ENCODE measurements at regions of chr17 and their contacts with region 1.

Region 1: GRCh38 chr17:39754161-39754951 is 16.6 kb downstream of the GRB7 start:
- DNase-seq: peak; percentile 97
- ATAC-seq: peak; percentile 94

Region 2: DNA sequence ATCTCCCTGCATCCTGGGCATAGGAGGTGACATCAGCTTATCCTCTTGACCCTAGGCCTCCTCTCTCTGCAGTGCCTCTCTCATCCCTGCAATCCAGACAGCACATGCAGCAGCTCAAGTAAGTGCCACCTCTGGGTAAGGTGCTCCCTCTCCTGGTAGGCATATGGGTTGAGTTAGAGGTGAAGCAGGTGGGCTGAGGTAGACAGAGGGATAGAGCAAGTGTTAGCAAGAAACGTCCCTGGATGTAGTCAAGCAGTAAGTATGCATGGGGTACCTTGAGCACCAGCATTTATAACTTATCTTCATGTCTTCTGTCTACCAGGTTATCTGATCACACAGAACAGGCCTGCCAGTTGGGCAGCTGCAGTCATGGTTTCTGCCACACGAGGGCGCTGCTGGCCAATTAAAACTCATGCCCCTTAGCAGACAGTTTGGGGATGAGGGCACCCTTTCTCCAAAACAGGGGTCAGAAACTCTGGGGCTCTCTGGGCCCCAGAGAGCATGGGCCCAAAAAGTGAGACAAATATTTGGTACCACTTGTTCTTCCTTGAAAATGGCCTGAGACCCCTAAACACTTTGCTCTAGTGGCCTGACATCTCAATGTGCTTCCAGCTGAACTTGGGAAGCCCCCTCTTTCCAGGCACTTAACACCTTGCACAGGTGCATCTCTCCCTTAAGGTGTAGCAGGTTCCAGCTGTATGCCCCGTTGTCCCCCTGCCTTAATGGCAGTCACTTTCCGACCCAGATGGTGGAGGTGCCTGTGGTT is 206.5 kb before region 1 on chr17:
- intact Hi-C with region 1: loop called (anchors 5 kb)
- DNase-seq: peak; percentile 73
- ATAC-seq: peak; percentile 70

Region 3: DNA sequence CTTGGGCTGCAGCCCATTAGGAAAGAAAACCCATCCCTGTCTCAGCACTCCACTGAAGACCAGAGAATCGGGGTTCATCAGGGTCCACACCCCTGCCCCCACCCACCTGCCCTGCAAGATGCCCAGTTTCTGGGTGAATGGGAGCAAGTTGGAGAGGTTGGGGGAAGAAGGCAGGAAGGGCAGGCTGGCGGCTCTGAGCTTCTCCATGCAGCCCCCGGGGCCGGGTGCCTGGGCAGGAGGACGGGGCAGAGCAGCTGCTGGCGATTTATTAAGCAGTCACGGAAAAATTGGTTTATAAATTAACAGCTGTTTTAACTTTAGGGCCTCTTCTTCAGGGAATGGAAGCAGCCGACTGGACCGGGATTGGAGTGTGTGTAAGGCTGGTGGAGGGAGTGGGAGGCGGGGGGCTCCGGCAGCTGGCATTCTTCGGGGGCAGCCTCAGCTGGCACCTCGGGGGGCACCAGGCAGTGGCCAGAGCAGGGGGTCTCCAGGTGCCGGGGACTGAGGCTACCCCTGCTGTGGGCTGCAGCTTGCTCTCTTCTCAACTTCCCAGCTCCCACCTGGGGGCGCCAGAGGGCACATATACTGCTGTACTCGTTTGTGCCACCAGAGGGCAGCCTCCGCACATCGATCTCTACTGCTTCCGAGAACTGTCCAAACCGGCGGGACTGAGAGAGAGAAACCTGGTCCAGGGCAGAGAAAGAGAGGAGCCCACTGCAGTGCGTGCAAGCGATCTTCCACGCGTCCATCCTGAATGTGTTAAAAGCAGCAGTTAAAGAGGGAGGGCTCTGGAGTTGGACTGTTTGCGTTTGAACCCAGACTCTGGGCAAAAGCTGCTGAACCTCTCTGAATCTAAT is 132.6 kb before region 1 on chr17:
- intact Hi-C with region 1: loop called (anchors 1 kb)
- DNase-seq: peak; percentile 96
- ATAC-seq: peak; percentile 79

Region 4: GRCh38 chr17:39636927-39637736 is 117.2 kb before region 1 on chr17 and contains the start of gene STARD3:
- intact Hi-C with region 1: loop called (anchors 5 kb)
- DNase-seq: peak; percentile 98
- ATAC-seq: peak; percentile 96
- total RNA-seq, gene STARD3: 21.4 TPM

Region 5: GRCh38 chr17:39668199-39668966 is 86.0 kb before region 1 on chr17 and contains the start of gene PNMT:
- intact Hi-C with region 1: loop called (anchors 5 kb)
- DNase-seq: peak; percentile 92
- ATAC-seq: no peak
- total RNA-seq, gene PNMT: 5.1 TPM

Region 6: GRCh38 chr17:39687811-39688518 is 66.4 kb before region 1 on chr17 and contains the start of gene PGAP3:
- intact Hi-C with region 1: no loop called
- DNase-seq: peak; percentile 92
- ATAC-seq: peak; percentile 94
- total RNA-seq, gene PGAP3: 10.4 TPM

Region 7: DNA sequence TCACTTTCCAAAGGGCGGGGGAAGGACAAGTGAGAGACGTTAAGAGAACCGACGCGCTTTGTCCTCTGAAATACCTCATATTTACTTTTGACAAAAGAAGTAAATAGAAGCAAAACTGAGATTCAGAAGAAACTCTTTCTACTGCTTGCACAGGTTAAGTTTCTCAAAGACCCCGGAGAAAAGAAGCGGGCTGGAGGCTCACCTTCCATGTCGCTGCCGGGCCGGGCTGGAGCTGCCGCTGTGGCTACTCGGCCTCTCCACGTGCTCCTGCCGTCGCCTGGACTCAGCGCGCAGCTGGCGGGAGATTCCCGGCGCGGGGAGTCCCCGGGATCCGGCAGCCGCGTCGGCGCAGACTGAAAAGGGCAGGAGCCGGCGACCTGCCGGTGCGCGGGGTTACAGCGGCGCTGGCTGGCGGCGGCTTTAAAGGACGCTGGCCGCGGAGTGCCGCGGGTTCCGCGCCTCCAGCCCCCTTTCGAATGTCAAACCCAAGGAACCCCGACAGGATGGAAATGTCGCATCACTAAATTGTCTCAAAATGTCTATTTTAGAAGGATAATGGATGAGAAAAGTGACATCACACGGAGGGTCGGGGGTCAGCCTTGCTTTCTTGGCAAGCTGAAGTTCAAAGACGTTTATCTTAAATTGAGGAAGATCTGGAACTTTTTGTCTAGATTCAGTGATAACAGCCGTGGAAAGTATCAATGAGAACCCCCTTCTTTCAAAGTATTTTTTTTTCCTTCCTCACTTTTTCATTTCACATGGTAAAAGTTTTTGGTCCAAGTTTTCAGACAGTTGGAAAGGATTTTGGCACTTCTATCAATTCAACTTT is 109.8 kb after region 1 on chr17 and contains the start of gene IKZF3:
- intact Hi-C with region 1: loop called (anchors 10 kb)
- DNase-seq: peak; percentile 75
- ATAC-seq: peak; percentile 65
- total RNA-seq, gene IKZF3: 0.32 TPM

Region 8: DNA sequence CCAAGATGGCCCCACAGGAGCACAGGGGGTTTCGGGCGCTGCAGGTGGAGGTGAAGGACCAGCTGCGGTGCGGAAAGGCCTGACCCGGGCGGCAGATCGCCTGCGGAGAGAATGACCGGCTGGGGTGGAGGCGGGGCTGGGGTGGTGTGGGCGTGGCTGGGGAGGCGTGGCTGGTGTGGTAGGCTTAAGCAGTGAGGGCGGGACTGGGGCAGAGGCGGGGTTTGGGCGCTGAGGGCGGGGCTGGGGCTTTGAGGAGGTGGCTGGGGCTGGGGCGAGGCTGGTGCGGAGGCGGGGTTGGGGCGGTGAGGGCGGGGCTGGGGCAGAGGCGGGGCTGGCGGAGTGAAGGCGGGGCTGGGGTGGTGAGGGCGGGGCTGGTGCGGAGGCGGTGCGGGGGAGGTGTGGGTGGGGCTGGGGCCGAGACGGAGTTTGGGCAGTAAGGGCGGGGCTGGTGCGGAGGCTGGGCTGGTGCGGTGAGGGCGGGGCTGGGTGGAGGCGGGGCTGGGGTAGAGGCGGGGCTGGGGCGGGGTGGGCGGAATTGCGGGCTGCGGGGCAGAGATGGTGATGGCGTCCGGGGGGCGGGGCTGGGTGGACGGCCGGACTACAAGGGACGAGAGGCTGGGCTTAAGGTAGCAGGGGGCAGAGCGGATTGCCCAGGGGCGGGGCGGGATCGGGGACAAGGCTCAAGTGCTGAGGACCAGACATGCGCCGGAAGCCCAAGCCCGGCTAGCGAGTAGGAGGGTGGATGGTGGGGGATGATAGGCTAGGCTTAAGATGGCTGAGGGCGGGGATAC is 198.5 kb after region 1 on chr17:
- intact Hi-C with region 1: loop called (anchors 10 kb)
- DNase-seq: peak; percentile 99
- ATAC-seq: peak; percentile 94